ENCODE measurements at regions of chr13 and their contacts with region 1.

Region 1: DNA sequence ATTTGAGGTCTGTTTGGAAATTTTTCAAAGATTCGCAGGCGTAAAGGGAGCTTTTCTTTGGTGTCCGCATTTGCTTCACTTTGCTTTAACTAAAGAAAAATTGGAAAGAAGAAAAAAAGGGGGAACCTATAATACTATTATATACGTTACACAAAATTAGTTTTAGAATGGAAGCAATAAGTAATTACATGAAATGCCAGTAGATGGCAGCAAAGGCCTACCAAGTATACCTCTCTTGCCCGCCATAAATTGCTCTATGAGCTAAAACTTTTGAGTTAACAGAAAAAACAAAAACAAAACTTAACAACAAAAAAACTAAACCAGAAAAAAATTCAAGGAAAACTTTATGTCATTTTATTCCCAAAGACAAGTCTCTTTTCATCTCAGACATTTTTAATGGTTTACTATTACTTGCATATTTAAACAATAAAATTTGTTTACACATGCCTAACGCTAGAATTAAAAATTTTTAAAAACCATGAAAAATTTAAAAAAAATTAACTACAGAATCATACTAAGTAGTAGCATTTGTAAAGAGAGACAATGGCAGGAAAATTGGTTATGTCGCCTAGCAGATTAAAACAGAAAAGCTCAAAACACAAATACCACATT is 271.4 kb downstream of the NALCN start:
- DNase-seq: peak; percentile 7 to 57
- H3K4me3 ChIP-seq: no peak overlapping the region
- H3K27ac ChIP-seq: no peak overlapping the region
- H3K4me1 ChIP-seq: peaks cover 15% of the 10 kb centered on the region
- H3K27me3 ChIP-seq: no peaks in the 10 kb centered on the region
- CTCF ChIP-seq: peak; percentile 87

Region 2: GRCh38 chr13:100883453-100883852 is 261.5 kb before region 1 on chr13:
- CTCF ChIA-PET with region 1: no interaction called
- POLR2A ChIA-PET with region 1: no interaction called
- intact Hi-C with region 1: no loop called
- DNase-seq: no peak
- H3K4me3 ChIP-seq: no peak overlapping the region
- H3K27ac ChIP-seq: no peak overlapping the region
- H3K4me1 ChIP-seq: no peaks in the 10 kb centered on the region
- H3K27me3 ChIP-seq: peaks cover 56% of the 10 kb centered on the region
- CTCF ChIP-seq: no peak

Region 3: GRCh38 chr13:101092985-101093384 is 51.9 kb before region 1 on chr13:
- CTCF ChIA-PET with region 1: no interaction called
- POLR2A ChIA-PET with region 1: no interaction called
- intact Hi-C with region 1: no loop called
- DNase-seq: no peak
- H3K4me3 ChIP-seq: no peak overlapping the region
- H3K27ac ChIP-seq: no peak overlapping the region
- H3K4me1 ChIP-seq: no peaks in the 10 kb centered on the region
- H3K27me3 ChIP-seq: no peaks in the 10 kb centered on the region
- CTCF ChIP-seq: no peak

Region 4: GRCh38 chr13:101170306-101170705 is 25.4 kb after region 1 on chr13:
- CTCF ChIA-PET with region 1: no interaction called
- POLR2A ChIA-PET with region 1: no interaction called
- intact Hi-C with region 1: no loop called
- DNase-seq: no peak
- H3K4me3 ChIP-seq: no peak overlapping the region
- H3K27ac ChIP-seq: no peak overlapping the region
- H3K4me1 ChIP-seq: no peaks in the 10 kb centered on the region
- H3K27me3 ChIP-seq: no peaks in the 10 kb centered on the region
- CTCF ChIP-seq: no peak

Region 5: GRCh38 chr13:101265934-101266333 is 121.0 kb after region 1 on chr13:
- CTCF ChIA-PET with region 1: no interaction called
- POLR2A ChIA-PET with region 1: no interaction called
- intact Hi-C with region 1: no loop called
- DNase-seq: no peak
- H3K4me3 ChIP-seq: no peak overlapping the region
- H3K27ac ChIP-seq: no peak overlapping the region
- H3K4me1 ChIP-seq: no peaks in the 10 kb centered on the region
- H3K27me3 ChIP-seq: no peaks in the 10 kb centered on the region
- CTCF ChIP-seq: no peak

Region 6: GRCh38 chr13:101289764-101290163 is 144.8 kb after region 1 on chr13:
- CTCF ChIA-PET with region 1: no interaction called
- POLR2A ChIA-PET with region 1: no interaction called
- intact Hi-C with region 1: loop called (anchors 10 kb)
- DNase-seq: peak in 1 of 2 experiments; percentile 10
- H3K4me3 ChIP-seq: no peak overlapping the region
- H3K27ac ChIP-seq: no peak overlapping the region
- H3K4me1 ChIP-seq: no peaks in the 10 kb centered on the region
- H3K27me3 ChIP-seq: no peaks in the 10 kb centered on the region
- CTCF ChIP-seq: no peak

Region 7: DNA sequence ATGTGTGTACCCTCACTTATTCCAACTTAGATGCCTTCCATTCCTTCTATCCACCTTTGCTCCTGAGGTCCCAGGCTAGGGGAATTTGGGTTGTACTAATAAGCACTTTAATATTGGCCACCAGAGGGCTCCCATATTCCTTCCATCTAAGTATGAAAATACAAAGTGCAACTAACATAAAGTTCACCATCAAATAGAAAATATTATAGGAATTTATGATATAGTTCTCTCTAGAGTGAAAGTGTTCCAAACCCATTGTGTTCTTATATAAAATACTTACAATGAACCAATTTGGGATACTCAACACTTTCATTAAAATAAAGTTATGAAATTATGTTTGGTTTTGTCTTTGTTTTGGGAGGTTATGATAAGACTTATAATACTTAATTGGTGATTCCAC is 369.9 kb after region 1 on chr13:
- CTCF ChIA-PET with region 1: no interaction called
- POLR2A ChIA-PET with region 1: no interaction called
- intact Hi-C with region 1: loop called (anchors 2 kb)
- DNase-seq: peak; percentile 29 to 64
- H3K4me3 ChIP-seq: no peak overlapping the region
- H3K27ac ChIP-seq: no peak overlapping the region
- H3K4me1 ChIP-seq: no peaks in the 10 kb centered on the region; the same call in 1 of the 2 replicates
- H3K27me3 ChIP-seq: no peaks in the 10 kb centered on the region
- CTCF ChIP-seq: peak; percentile 92

Region 8: DNA sequence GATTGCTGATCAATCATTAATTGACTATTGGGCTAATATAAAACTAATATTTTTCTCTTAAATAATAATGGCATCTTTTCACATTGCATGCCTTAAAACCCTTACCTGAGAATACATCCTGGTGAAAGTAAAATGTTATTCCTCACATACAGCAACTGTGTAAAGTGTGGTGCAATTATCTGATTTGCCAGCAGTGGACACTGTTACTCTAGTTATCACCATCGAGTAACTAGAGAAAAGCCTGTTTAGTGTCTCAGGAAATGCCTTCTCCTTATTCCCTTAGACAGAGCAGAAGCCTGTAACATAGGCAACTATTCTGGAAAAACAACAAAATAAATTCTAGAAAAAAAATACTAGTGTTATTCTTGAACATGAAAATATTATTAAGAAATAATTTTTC is 797.1 kb after region 1 on chr13:
- CTCF ChIA-PET with region 1: interaction called, 3 read pairs
- POLR2A ChIA-PET with region 1: no interaction called
- intact Hi-C with region 1: loop called (anchors 1 kb)
- DNase-seq: peak in 1 of 2 experiments; percentile 45
- H3K4me3 ChIP-seq: no peak overlapping the region
- H3K27ac ChIP-seq: no peak overlapping the region
- H3K4me1 ChIP-seq: no peaks in the 10 kb centered on the region
- H3K27me3 ChIP-seq: peaks cover 9% of the 10 kb centered on the region; the same call in 1 of the 2 replicates
- CTCF ChIP-seq: peak; percentile 77